ENCODE measurements at regions of chr10 and their contacts with region 1.

Region 1: GRCh38 chr10:71285180-71285545 is 33.9 kb upstream of the SLC29A3 start:
- DNase-seq: peak in 9 of 10 donors; percentile 54 to 83 (median 62)
- H3K4me3 ChIP-seq: no peak overlapping the region
- H3K27ac ChIP-seq: peak overlapping the region in 5 of 59 donors; percentile 3 to 69 (median 29)
- H3K27me3 ChIP-seq: no peaks in the 10 kb centered on the region
- CTCF ChIP-seq: peak; percentile 61 to 94 (median 85)

Region 2: GRCh38 chr10:70549962-70550458 is 735.2 kb before region 1 on chr10:
- intact Hi-C with region 1: loop called (anchors 10 kb)
- DNase-seq: peak; percentile 57 to 79 (median 64)
- H3K4me3 ChIP-seq: no peak overlapping the region
- H3K27ac ChIP-seq: peak overlapping the region in 1 of 59 donors; percentile 58
- H3K27me3 ChIP-seq: no peaks in the 10 kb centered on the region
- CTCF ChIP-seq: peak; percentile 82 to 97 (median 93)

Region 3: GRCh38 chr10:70903262-70903921 is 381.8 kb before region 1 on chr10:
- intact Hi-C with region 1: loop called in 1 of 2 experiments (anchors 2 kb)
- DNase-seq: peak in 9 of 10 donors; percentile 40 to 75 (median 67)
- H3K4me3 ChIP-seq: no peak overlapping the region
- H3K27ac ChIP-seq: no peak overlapping the region
- H3K27me3 ChIP-seq: no peaks in the 10 kb centered on the region
- CTCF ChIP-seq: peak; percentile 67 to 94 (median 88)

Region 4: DNA sequence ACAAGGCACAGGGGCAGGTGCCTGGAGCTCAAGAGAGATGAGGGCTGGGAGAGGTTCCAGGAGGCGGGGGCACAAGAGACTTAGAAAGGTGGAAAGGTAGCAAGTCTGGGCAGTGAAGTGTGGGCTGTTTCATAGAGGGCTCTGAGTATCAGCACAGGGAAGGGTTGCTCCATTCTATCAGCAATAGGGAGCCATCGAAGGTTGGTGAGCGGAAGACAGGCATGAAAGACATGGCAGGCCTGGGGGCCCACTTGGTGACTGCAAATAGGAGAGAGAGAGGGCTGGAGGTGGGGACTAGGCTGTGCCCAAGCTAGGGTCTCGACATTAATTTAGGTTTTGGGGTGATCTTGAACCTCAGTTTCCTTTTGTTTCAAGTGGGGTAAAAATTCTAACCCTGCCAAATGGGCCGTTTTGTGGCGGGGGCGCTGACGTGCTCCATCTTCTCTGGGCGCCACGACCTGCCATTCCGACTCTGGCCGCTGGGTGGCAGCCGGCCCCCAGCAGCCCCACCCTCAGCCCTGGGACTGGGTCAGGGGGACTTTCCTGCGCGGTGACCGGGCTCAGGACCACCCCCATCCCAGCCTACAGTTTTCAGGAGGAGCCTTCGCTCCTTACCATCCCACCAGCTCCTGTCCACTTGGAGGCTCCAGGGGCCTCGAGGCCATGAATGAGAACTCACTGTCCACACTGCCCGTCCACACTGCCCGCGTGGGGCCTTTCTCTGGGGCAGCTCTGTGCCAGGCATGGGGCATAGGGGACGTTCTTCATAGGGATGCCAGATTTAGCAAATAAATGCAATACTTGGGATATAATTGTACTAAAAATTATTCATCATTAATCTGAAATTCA is 359.6 kb before region 1 on chr10:
- intact Hi-C with region 1: loop called (anchors 2 to 5 kb)
- DNase-seq: peak in 7 of 10 donors; percentile 30 to 76 (median 45)
- H3K4me3 ChIP-seq: no peak overlapping the region
- H3K27ac ChIP-seq: peak overlapping the region in 1 of 59 donors; percentile 83
- H3K27me3 ChIP-seq: no peaks in the 10 kb centered on the region
- CTCF ChIP-seq: peak; percentile 76 to 97 (median 92)

Region 5: DNA sequence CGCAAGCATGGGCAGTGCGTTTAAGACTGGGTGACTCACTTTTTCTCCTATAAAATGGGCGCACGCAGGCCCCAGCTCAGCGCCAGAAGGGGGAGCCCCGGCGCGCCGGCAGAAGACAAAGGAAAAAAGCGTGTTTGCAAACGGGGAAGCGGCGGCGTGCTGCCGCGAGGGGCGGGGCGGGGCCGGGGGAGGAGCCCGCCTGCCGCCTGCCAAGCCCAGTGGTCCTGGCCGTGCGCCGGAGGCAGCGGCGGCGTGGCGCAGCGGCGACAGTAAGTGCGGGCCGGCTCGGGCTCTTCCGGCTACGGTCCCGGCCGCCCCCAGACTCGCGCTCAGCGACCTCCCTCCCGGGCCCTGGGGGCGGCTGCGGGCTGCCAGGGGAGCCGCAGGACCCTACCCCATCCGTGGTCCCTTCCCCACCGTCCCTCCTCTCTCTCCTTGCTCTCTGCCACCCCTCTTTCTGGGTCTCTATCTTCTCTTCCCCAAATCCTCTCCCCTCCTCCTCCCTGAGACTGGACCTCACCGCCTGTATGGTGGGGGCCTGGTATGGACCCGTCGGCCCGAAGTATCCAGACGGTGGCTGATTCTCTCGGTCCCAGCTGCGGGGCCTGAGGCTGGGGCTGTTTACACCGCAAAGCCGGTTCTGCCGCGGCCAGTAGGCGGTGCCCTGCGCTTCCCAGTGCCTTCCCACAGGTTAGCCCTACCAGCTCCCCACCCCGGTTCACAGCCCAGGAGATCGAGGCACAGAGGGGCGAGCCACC is 34.1 kb after region 1 on chr10 and contains the start of gene SLC29A3:
- intact Hi-C with region 1: no loop called
- DNase-seq: peak; percentile 74 to 87 (median 80)
- H3K4me3 ChIP-seq: peak within 1 kb of the TSS; percentile 61 to 97 (median 81)
- H3K27ac ChIP-seq: peak within 1 kb of the TSS; percentile 50 to 94 (median 86)
- H3K27me3 ChIP-seq: no peaks in the 10 kb centered on the region
- CTCF ChIP-seq: peak; percentile 40 to 77 (median 62)
- total RNA-seq, gene SLC29A3: 5.1 to 15.4 (median 9.2) TPM